CD14-positive monocyte (primary cell): ENCODE measurements at regions of chr10 and their contacts with region 1.

Region 1: DNA sequence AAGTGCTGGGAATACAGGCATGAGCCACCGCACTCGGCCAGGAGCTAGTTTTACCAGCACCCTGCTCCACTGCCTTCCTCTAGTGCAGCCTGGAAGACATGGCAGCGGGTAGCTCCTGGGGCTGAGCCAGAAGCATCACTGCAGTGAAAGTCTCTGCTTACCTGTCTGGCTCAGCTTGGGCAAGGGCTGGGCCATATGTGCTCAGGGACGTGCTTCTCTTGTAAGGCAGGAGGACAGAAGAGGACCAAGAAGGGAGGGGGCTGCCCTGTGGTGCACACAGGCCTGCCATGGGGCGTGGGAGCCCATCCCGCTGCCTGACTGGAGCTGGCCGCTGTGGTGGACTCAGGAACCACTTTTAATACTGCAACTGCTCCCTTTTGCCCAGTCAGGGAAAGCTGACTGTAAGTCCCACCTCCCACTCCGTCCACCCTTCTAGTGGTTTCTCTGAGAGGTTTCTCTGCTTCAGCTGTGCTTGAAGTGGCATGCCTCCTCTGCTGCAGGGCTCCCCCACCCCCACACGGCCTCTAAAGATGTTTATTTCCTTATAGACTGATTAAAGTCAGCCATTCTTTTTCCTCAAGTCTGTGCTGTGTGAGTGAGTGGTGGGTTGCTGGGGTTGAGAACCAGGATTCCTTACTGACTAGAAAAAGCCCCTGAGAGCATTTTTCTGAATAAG is 25.3 kb upstream of the C10orf95 start:
- DNase-seq: peak in 1 of 3 donors; percentile 2
- H3K4me3 ChIP-seq: no peak overlapping the region
- H3K4me3 Mint-ChIP-seq: no peak overlapping the region
- H3K27ac ChIP-seq: no peak overlapping the region
- H3K27ac Mint-ChIP-seq: no peak overlapping the region
- H3K4me1 ChIP-seq: peaks cover 0 to 6% of the 10 kb centered on the region in 2 donors
- H3K4me1 Mint-ChIP-seq: peaks cover 9% of the 10 kb centered on the region
- H3K27me3 ChIP-seq: no peaks in the 10 kb centered on the region
- H3K27me3 Mint-ChIP-seq: no peaks in the 10 kb centered on the region
- CTCF ChIP-seq: no peak

Region 2: DNA sequence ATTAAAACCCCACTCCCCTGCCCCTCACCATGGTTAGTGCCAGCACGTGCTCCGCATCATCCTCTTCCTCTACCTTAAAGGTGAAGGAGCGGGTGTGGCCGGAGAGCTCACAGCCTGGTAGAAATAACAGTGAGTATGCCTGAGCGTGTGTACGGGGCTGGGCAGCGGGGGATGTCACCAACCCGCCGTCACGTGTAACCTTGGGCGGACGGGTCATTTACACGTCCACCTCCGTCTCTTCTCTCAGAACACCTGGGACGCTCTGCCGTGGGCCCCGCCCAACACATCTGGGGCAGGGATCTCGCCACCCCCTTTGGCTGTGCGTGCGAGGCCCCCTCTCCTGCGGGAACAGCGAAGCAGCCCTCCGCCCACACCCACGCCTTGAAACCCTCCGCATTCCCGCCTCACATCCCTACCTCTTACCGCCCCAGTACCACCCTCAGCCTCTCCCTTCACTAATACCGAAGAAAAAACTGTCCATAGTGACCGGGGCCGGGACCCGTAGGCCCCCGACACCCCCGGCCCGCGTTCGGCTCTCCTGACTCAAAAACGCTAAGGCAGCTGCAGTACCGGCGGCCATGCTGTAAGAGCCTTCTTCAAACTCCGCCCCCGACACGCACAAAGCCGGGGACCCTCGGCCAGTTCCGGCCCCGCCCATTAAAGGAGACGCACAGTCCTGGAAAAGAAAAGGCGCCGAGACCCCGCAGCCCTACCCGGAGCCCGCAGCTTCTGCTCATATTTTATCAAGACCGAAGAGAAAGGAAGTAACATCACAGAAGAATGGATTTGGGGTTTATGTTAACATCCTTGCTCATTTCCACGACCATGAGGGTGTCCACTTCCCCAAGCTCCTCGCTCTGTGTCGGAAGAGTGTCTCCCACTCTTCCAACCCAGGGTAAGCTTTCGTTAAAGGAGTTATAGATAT is 693.5 kb before region 1 on chr10 and contains the start of gene NPM3:
- intact Hi-C with region 1: no loop called
- DNase-seq: peak; percentile 19 to 31 (median 30)
- H3K4me3 ChIP-seq: peak within 1 kb of the TSS; percentile 51 to 79 (median 62)
- H3K4me3 Mint-ChIP-seq: peak within 1 kb of the TSS; percentile 99
- H3K27ac ChIP-seq: peak within 1 kb of the TSS; percentile 14 to 59
- H3K27ac Mint-ChIP-seq: peak within 1 kb of the TSS; percentile 47 to 92 (median 82)
- H3K4me1 ChIP-seq: peaks cover 35 to 52% of the 10 kb centered on the region in 2 donors
- H3K4me1 Mint-ChIP-seq: peaks cover 47% of the 10 kb centered on the region
- H3K27me3 ChIP-seq: peaks cover 11 to 17% of the 10 kb centered on the region in 2 donors
- H3K27me3 Mint-ChIP-seq: peaks cover 16 to 26% (median 19%) of the 10 kb centered on the region in 3 donors
- CTCF ChIP-seq: no peak
- polyA plus RNA-seq, gene NPM3: 1.2 to 8.1 (median 3.8) TPM

Region 3: GRCh38 chr10:102420810-102421644 is 55.6 kb before region 1 on chr10 and contains the start of gene FBXL15:
- intact Hi-C with region 1: loop called in 1 of 2 experiments (anchors 2 kb)
- DNase-seq: peak; percentile 93 to 97 (median 96)
- H3K4me3 ChIP-seq: peak within 1 kb of the TSS; percentile 68 to 96 (median 82)
- H3K4me3 Mint-ChIP-seq: peak within 1 kb of the TSS; percentile 93 to 97
- H3K27ac ChIP-seq: peak within 1 kb of the TSS; percentile 70 to 71
- H3K27ac Mint-ChIP-seq: peak within 1 kb of the TSS; percentile 89 to 98 (median 96)
- H3K4me1 ChIP-seq: peaks cover 33 to 41% of the 10 kb centered on the region in 2 donors
- H3K4me1 Mint-ChIP-seq: peaks cover 34% of the 10 kb centered on the region
- H3K27me3 ChIP-seq: peaks cover 11 to 22% of the 10 kb centered on the region in 2 donors
- H3K27me3 Mint-ChIP-seq: peaks cover 21 to 34% (median 24%) of the 10 kb centered on the region in 3 donors
- CTCF ChIP-seq: no peak
- polyA plus RNA-seq, gene FBXL15: 16.0 to 36.3 (median 25.5) TPM

Region 4: DNA sequence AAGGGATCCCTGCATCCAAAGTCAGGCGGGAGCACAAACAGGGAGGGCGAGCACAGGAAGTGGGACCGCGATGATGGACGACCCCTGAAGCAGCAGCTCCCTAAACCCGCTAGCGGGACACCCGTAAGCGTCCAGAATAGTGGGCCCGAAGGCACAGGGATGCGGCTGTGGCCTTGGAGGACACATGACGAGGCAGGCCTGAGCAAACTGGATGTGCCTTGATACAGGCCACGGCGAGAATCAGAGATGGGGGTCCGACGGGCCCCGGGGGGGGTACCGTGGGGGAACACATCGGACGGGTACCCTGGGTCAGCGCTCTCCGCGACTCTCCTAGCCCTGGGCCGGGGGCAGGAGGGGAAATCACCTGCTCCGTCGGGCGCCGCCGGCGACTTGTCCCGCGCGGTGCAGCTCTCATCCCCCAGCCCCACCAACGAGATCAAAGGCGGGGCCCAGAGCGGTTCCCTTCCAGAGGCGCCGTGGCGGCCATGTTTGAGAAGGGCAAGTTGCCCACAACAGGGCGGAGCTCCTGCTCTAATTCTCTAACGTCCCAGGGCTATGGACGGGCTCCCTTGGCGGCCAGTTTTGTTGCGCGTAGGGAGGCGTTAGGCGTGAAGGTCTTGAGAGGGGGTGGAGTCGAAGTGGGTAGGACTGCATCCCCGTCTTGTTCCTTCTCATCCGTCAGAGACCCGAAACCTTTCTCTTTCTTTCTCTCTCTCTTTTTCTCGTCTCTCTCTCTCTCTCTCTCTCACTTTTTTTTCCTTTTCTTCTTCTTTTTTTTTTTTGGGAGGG is 44.2 kb before region 1 on chr10 and contains the start of gene CUEDC2:
- intact Hi-C with region 1: loop called in 1 of 2 experiments (anchors 5 kb)
- DNase-seq: peak; percentile 91 to 95 (median 94)
- H3K4me3 ChIP-seq: peak within 1 kb of the TSS; percentile 57 to 97 (median 92)
- H3K4me3 Mint-ChIP-seq: peak within 1 kb of the TSS; percentile 86 to 89
- H3K27ac ChIP-seq: peak within 1 kb of the TSS; percentile 41 to 87
- H3K27ac Mint-ChIP-seq: peak within 1 kb of the TSS; percentile 89 to 94 (median 92)
- H3K4me1 ChIP-seq: peaks cover 41% of the 10 kb centered on the region in 2 donors
- H3K4me1 Mint-ChIP-seq: peaks cover 45% of the 10 kb centered on the region
- H3K27me3 ChIP-seq: no peaks in the 10 kb centered on the region
- H3K27me3 Mint-ChIP-seq: no peaks in the 10 kb centered on the region
- CTCF ChIP-seq: no peak
- polyA plus RNA-seq, gene CUEDC2: 58.5 to 70.2 (median 66.7) TPM